ENCODE measurements at regions of chr7 and their contacts with region 1.

Region 1: GRCh38 chr7:129006636-129007414 is 48.1 kb downstream of the TNPO3 start:
- DNase-seq: no peak
- ATAC-seq: no peak
- H3K4me3 ChIP-seq: no peak overlapping the region
- H3K27ac ChIP-seq: no peak overlapping the region
- H3K4me1 ChIP-seq: no peaks in the 10 kb centered on the region
- H3K27me3 ChIP-seq: no peaks in the 10 kb centered on the region
- CTCF ChIP-seq: no peak

Region 2: GRCh38 chr7:129017933-129018538 is 11.2 kb after region 1 on chr7:
- CTCF ChIA-PET with region 1: interaction called, 10 read pairs
- POLR2A ChIA-PET with region 1: no interaction called
- in situ Hi-C with region 1: no loop called
- intact Hi-C with region 1: no loop called
- DNase-seq: no peak
- ATAC-seq: no peak
- H3K4me3 ChIP-seq: no peak overlapping the region
- H3K27ac ChIP-seq: no peak overlapping the region
- H3K4me1 ChIP-seq: no peaks in the 10 kb centered on the region
- H3K27me3 ChIP-seq: no peaks in the 10 kb centered on the region
- CTCF ChIP-seq: no peak

Region 3: GRCh38 chr7:129433847-129434674 is 427.2 kb after region 1 on chr7 and contains the start of gene STRIP2:
- CTCF ChIA-PET with region 1: no interaction called
- POLR2A ChIA-PET with region 1: no interaction called
- in situ Hi-C with region 1: no loop called
- intact Hi-C with region 1: no loop called
- DNase-seq: peak; percentile 65
- ATAC-seq: peak; percentile 97
- H3K4me3 ChIP-seq: peak within 1 kb of the TSS; percentile 80 to 82
- H3K27ac ChIP-seq: peak within 1 kb of the TSS; percentile 81
- H3K4me1 ChIP-seq: peaks cover 4% of the 10 kb centered on the region
- H3K27me3 ChIP-seq: peaks cover 6% of the 10 kb centered on the region; the same call in 1 of the 2 replicates
- CTCF ChIP-seq: 0 out of 2 replicates have a peak, but pooled peaks have one; percentile 8
- total RNA-seq, gene STRIP2: 5.1 TPM

Measured in Panc1 (cell line).